Caco-2 (cell line): ENCODE measurements at regions of chr1 and their contacts with region 1.

Region 1: GRCh38 chr1:226945106-226945857 is 5.2 kb downstream of the COQ8A start:
- DNase-seq: peak; percentile 79 to 90
- H3K4me3 ChIP-seq: peak overlapping the region; percentile 16
- H3K4me3 Mint-ChIP-seq: peak overlapping the region; percentile 77
- H3K27ac Mint-ChIP-seq: peak overlapping the region; percentile 94
- H3K4me1 ChIP-seq: peaks cover 32% of the 10 kb centered on the region
- H3K4me1 Mint-ChIP-seq: peaks cover 47% of the 10 kb centered on the region
- H3K27me3 ChIP-seq: no peaks in the 10 kb centered on the region
- H3K27me3 Mint-ChIP-seq: no peaks in the 10 kb centered on the region
- CTCF ChIP-seq: no peak

Region 2: DNA sequence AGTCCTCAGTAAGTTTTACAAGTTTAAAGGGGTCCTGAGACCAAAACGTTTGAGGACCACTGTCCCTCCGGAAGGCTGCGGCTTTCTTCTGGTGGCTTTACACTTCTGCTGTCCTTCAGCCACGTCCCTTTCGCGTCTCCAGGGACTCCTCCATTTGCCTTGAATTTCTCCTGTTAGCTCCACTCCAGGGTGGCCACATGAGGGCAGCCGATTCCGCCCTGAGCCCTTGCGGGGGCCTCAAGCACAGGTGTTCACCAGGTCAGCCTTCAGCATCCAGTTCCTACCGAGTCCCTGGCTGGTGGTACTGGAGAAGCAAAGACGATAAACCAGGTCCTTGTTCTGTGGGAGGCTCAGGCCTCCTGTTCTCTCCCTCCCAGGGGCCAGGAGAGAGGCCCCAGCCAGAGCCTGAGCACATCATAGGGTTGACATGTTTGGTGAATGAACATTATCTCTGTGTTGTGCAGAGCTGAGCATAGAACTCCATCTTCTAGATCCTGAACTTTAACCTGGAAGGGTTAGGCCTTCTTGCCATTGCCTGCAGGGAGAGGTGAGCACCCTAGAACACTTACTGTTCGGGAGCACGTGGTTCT is 32.6 kb before region 1 on chr1:
- CTCF ChIA-PET with region 1: no interaction called
- POLR2A ChIA-PET with region 1: no interaction called
- intact Hi-C with region 1: loop called (anchors 1 kb)
- DNase-seq: peak; percentile 82 to 85
- H3K4me3 ChIP-seq: no peak overlapping the region
- H3K4me3 Mint-ChIP-seq: no peak overlapping the region
- H3K27ac Mint-ChIP-seq: no peak overlapping the region
- H3K4me1 ChIP-seq: no peaks in the 10 kb centered on the region
- H3K4me1 Mint-ChIP-seq: no peaks in the 10 kb centered on the region
- H3K27me3 ChIP-seq: no peaks in the 10 kb centered on the region
- H3K27me3 Mint-ChIP-seq: no peaks in the 10 kb centered on the region
- CTCF ChIP-seq: peak; percentile 71 to 91

Region 3: DNA sequence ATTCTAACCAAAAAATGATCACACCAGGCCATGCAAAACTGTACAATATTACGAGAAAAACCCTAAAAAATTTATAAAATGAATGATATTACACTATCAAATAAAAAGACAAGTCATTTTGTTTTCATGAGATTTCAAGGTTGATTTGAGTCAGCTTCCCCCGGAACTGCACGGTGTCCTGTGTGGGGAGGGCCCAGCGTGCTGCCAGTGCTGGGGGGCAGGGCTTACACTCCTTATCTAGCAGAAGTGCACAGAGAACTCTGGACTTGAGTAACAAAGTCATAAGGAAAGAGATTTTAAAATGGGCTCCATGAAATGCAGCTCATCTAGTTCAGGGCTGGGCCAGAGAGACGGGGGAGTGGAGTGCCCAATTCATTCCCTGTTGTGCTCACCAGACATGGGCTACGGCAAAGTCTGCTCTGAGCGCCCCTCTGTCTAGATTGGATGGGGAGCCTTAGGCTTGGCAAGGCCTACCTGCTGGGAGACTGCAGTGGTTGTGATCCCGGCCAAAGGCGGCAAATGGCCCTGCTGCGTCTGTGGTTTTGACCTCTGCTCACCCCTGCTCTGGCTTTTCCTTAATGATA is 44.9 kb after region 1 on chr1:
- CTCF ChIA-PET with region 1: no interaction called
- POLR2A ChIA-PET with region 1: no interaction called
- intact Hi-C with region 1: loop called (anchors 5 kb)
- DNase-seq: no peak
- H3K4me3 ChIP-seq: no peak overlapping the region
- H3K4me3 Mint-ChIP-seq: no peak overlapping the region
- H3K27ac Mint-ChIP-seq: peak overlapping the region; percentile 18
- H3K4me1 ChIP-seq: peaks cover 8% of the 10 kb centered on the region
- H3K4me1 Mint-ChIP-seq: peaks cover 13% of the 10 kb centered on the region
- H3K27me3 ChIP-seq: no peaks in the 10 kb centered on the region
- H3K27me3 Mint-ChIP-seq: no peaks in the 10 kb centered on the region
- CTCF ChIP-seq: no peak